ENCODE measurements at regions of chr11 and their contacts with region 1.

Region 1: DNA sequence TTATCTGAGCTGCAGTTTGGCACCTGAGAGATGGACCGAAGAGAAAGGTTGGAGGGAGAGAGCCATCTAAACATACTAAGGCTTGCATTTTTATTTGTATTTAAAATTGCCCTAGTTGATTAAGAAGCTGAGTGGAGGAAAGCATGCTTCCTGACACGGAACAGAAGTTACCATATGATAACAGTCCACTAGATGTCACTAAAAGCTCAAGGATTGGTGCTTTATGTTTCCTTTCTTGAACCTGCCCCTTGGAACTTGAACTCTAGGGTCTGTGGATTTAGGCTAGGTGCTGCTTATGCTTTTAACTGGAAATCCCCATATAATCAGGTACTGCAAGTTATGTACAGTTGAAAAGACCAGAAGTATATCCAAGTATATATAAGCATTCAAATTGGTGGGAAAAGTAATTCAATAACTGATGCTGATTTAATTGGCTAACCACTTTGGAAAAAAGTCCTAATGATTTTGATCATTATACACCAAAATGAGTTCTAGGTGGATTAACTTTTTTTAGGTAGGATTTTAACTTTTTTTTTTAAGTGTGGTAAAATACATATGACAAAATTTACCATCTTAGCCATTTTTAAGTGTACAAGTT is 9.5 kb downstream of the RBMXL2 start:
- DNase-seq: peak in 1 of 2 donors; percentile 74
- ATAC-seq: peak in 2 of 3 donors; percentile 52 to 67
- H3K4me3 ChIP-seq: no peak overlapping the region
- H3K4me3 Mint-ChIP-seq: no peak overlapping the region
- H3K27ac ChIP-seq: no peak overlapping the region
- H3K27ac Mint-ChIP-seq: no peak overlapping the region
- H3K4me1 ChIP-seq: no peaks in the 10 kb centered on the region
- H3K4me1 Mint-ChIP-seq: no peaks in the 10 kb centered on the region
- H3K27me3 ChIP-seq: peaks cover 3% of the 10 kb centered on the region
- H3K27me3 Mint-ChIP-seq: peaks cover 10 to 20% of the 10 kb centered on the region in 2 donors
- CTCF ChIP-seq: peak; percentile 57

Region 2: DNA sequence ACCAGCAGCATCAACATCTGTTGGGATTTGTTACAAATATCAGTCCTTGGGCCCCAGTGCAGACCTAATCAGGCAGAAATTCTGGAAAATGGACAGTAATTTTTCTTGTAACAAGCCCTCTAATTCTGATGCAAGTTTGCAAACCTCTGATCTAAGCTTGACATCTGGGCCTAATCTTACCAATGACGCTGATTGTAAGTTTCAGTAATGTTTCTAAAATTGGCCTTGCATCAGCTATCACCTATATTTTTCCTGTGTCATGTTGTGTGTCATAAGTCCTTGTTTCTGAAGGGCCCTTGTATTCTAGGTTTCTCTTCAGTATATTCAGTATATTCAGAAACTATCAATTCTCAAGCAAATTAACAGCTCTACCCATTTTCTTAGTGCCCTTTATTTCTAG is 135.7 kb before region 1 on chr11:
- intact Hi-C with region 1: no loop called
- DNase-seq: no peak
- ATAC-seq: no peak
- H3K4me3 ChIP-seq: no peak overlapping the region
- H3K4me3 Mint-ChIP-seq: no peak overlapping the region
- H3K27ac ChIP-seq: no peak overlapping the region
- H3K27ac Mint-ChIP-seq: no peak overlapping the region
- H3K4me1 ChIP-seq: no peaks in the 10 kb centered on the region
- H3K4me1 Mint-ChIP-seq: no peaks in the 10 kb centered on the region
- H3K27me3 ChIP-seq: no peaks in the 10 kb centered on the region
- H3K27me3 Mint-ChIP-seq: no peaks in the 10 kb centered on the region
- CTCF ChIP-seq: no peak

Region 3: DNA sequence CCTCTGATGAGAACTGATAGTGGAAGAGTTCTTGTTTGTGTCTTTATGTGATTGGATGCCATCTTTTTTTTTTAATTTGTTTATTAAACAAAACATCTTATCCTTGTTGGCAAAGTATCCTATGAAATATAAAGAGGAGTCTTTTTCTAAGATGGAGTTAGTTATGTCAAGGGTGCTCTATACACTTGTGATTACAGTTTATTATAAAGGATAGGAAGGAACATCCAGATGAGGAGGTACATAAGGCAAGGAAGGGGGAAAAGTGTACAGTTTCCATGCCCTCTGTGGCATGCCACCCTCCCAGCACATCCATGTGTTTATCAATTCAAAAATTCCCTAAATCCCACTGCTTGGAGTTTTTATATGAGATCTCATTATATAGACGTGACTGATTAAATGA is 16.9 kb before region 1 on chr11:
- intact Hi-C with region 1: no loop called
- DNase-seq: no peak
- ATAC-seq: no peak
- H3K4me3 ChIP-seq: no peak overlapping the region
- H3K4me3 Mint-ChIP-seq: no peak overlapping the region
- H3K27ac ChIP-seq: no peak overlapping the region
- H3K27ac Mint-ChIP-seq: no peak overlapping the region
- H3K4me1 ChIP-seq: no peaks in the 10 kb centered on the region
- H3K4me1 Mint-ChIP-seq: no peaks in the 10 kb centered on the region
- H3K27me3 ChIP-seq: peaks cover 4% of the 10 kb centered on the region
- H3K27me3 Mint-ChIP-seq: peaks cover 2 to 9% of the 10 kb centered on the region in 2 donors
- CTCF ChIP-seq: no peak

Region 4: DNA sequence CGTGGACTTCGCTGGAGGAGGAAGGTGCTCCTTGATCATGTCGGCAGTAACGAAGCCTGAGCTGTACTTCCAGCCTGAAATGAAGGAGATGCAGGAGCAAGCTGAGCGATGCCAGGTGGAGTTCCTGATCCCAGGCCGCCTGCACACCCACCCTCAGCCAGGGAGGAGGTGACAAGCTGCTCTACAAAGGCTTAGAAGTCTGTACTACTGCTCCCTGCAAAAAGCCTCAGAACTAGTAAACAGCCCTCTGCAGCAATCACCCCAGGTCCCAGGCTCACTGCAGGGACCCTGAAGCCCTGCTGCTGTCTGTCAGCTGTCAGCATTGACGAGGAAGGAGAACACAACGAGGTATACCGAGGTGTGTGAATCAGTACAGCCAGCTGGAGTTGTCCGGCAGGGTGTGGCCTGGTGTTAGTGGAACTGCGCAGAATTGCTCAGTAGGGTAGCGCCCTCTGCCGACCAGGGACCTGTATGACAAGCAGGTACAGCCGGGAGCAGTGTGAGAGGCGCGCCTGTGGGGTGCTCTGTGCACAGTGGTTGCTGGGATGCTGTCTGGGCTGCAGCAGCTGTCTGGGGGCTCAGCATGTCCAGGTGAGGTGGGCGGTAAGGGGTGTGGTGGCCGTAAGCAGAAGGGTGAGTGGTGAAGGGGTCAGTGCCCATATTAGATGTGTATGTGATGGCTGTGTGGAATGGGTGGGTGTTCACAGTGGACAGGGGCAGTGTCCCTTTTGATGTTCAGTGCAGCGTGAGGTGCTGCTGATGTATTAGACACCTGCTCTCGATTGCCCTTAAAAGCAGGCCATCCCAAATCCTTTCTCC is 567.3 kb after region 1 on chr11:
- intact Hi-C with region 1: loop called (anchors 1 kb)
- DNase-seq: peak; percentile 64 to 83
- ATAC-seq: peak; percentile 93 to 99 (median 97)
- H3K4me3 ChIP-seq: no peak overlapping the region
- H3K4me3 Mint-ChIP-seq: no peak overlapping the region
- H3K27ac ChIP-seq: no peak overlapping the region
- H3K27ac Mint-ChIP-seq: no peak overlapping the region
- H3K4me1 ChIP-seq: peaks cover 5% of the 10 kb centered on the region
- H3K4me1 Mint-ChIP-seq: peaks cover 0 to 7% of the 10 kb centered on the region in 2 donors
- H3K27me3 ChIP-seq: no peaks in the 10 kb centered on the region
- H3K27me3 Mint-ChIP-seq: peaks cover 0 to 2% of the 10 kb centered on the region in 2 donors
- CTCF ChIP-seq: peak; percentile 83

Region 5: GRCh38 chr11:7694235-7694634 is 595.9 kb after region 1 on chr11:
- intact Hi-C with region 1: loop called (anchors 2 kb)
- DNase-seq: peak in 1 of 2 donors; percentile 8
- ATAC-seq: no peak
- H3K4me3 ChIP-seq: no peak overlapping the region
- H3K4me3 Mint-ChIP-seq: no peak overlapping the region
- H3K27ac ChIP-seq: no peak overlapping the region
- H3K27ac Mint-ChIP-seq: no peak overlapping the region
- H3K4me1 ChIP-seq: peaks cover 3% of the 10 kb centered on the region
- H3K4me1 Mint-ChIP-seq: no peaks in the 10 kb centered on the region
- H3K27me3 ChIP-seq: peaks cover 10% of the 10 kb centered on the region
- H3K27me3 Mint-ChIP-seq: peaks cover 33 to 51% of the 10 kb centered on the region in 2 donors
- CTCF ChIP-seq: no peak

Measured in natural killer cell (primary cell).